Activated CD4-positive, alpha-beta T cell treated with anti-CD3 and anti-CD28 coated beads for 36 hours (primary cell): ENCODE measurements at regions of chr15 and their contacts with region 1.

Region 1: GRCh38 chr15:94306700-94307650 is 75.6 kb downstream of the MCTP2 start:
- DNase-seq: peak; percentile 38
- ATAC-seq: peak; percentile 74
- H3K4me3 Mint-ChIP-seq: no peak overlapping the region
- H3K27ac Mint-ChIP-seq: peak overlapping the region; percentile 87
- H3K4me1 Mint-ChIP-seq: peaks cover 43% of the 10 kb centered on the region
- H3K27me3 Mint-ChIP-seq: no peaks in the 10 kb centered on the region

Region 2: DNA sequence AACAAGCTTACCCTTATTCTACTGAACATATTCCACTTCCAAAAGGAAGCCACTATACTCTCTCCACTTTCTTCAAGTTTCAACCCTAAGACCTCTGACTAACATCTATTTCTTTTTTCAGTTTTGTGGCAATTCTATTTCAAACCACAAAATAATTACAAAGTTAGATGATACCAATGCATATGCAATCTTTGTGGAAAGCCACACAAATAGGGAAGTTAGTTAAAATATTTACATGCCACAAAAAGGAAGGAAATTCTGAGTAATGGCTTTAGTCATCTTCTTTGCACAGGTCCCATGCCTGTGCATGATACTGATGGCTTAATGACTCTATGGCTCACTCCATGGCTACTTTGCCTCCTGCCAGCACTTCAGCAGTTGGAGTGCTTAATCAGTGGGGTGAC is 132.6 kb before region 1 on chr15:
- CTCF ChIA-PET with region 1: interaction called, 3 read pairs
- POLR2A ChIA-PET with region 1: no interaction called
- intact Hi-C with region 1: loop called (anchors 1 to 5 kb)
- DNase-seq: peak; percentile 16
- ATAC-seq: peak; percentile 95
- H3K4me3 Mint-ChIP-seq: no peak overlapping the region
- H3K27ac Mint-ChIP-seq: no peak overlapping the region
- H3K4me1 Mint-ChIP-seq: peaks cover 25% of the 10 kb centered on the region
- H3K27me3 Mint-ChIP-seq: peaks cover 7% of the 10 kb centered on the region

Region 3: DNA sequence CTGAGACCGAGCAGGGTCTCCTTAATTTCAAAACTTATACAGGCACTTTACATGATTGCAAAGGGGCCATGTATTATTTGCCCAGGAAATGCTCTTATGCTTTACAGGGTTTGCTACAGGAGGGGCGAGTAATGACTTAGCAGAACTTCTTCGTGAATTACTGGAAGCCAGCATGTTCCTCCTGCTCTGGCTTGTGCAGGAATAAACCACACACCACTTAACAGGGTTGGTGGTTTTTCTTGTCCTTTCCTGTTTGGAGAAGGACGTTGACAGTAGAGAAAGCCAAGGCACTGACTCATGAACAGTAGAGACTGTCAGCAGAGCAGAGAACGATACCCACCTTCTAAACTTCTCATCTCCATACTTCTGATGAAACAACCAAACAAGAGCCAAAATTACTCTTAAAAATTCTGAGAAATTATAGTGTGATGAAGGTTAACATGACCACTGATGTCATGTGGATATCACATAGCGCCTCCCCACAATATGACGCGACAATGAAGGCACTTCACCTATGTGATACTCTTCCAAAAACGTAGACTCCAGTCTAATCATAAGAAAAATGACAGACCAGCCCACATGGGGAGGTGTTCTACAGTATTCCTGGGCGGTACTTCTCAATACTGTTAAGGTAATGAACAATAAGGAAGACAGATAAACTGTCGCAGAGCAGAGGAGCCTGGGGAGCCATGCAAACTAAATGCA is 100.4 kb before region 1 on chr15:
- CTCF ChIA-PET with region 1: no interaction called
- POLR2A ChIA-PET with region 1: no interaction called
- intact Hi-C with region 1: loop called (anchors 1 kb)
- DNase-seq: peak; percentile 69
- ATAC-seq: peak; percentile 95
- H3K4me3 Mint-ChIP-seq: peak overlapping the region; percentile 21
- H3K27ac Mint-ChIP-seq: peak overlapping the region; percentile 77
- H3K4me1 Mint-ChIP-seq: peaks cover 16% of the 10 kb centered on the region
- H3K27me3 Mint-ChIP-seq: peaks cover 25% of the 10 kb centered on the region

Region 4: DNA sequence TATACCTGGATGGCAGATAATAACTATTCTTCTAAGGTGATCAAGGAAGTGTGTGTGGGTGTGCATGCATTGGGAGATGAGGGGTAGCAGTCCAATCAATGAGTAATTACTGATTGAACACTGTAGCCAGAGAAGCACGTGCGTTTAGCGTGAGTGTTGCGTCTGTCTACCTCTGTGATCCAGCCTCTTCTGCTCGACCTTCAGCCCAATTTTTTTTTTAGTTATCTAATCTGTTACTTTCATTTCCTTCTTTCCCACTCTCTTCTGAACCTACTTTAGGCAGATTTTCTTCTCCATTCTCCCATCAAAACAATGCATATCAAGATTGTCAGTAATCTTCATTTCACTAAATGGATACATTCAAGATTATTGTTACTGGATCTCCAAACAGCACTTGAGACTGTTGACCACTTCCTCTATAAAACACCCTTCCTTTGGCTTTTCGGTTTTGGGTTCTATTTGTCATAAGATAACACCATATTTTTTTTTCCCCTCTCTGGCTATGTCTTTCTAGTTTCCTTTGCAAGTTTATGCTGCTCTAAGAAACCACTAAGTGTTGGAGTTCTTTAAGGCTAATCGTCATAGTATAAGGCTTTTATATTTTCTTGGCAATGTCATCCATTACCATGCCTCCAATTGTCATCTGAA is 34.6 kb before region 1 on chr15:
- CTCF ChIA-PET with region 1: interaction called, 4 read pairs
- POLR2A ChIA-PET with region 1: no interaction called
- intact Hi-C with region 1: loop called (anchors 5 kb)
- DNase-seq: no peak
- ATAC-seq: peak; percentile 83
- H3K4me3 Mint-ChIP-seq: no peak overlapping the region
- H3K27ac Mint-ChIP-seq: no peak overlapping the region
- H3K4me1 Mint-ChIP-seq: peaks cover 9% of the 10 kb centered on the region
- H3K27me3 Mint-ChIP-seq: no peaks in the 10 kb centered on the region

Region 5: DNA sequence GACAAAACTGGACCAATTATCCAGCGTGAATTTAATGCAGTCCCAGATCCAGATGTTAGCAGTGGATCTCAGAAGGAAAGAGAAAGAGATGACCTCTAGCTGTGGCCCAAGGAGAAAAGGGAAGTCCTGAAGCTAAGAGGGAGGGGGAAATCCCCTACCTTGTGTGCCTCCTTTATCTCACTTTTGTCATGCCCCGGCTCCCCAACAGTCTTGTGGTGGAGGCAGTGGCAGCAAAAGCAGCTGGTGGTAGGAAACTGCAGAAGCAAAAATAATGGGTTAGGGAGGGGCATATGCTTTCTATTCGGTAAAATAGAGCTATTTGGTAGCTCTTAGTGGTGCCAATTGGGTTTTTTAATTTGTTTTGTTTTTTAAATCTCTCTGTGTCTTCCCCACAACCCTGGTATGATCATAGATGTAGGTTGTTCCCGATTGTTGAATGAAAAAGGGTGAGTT is 19.2 kb before region 1 on chr15:
- CTCF ChIA-PET with region 1: interaction called, 4 read pairs
- POLR2A ChIA-PET with region 1: no interaction called
- intact Hi-C with region 1: loop called in 1 of 2 experiments (anchors 2 kb)
- DNase-seq: peak; percentile 67
- ATAC-seq: peak; percentile 96
- H3K4me3 Mint-ChIP-seq: peak overlapping the region; percentile 42
- H3K27ac Mint-ChIP-seq: peak overlapping the region; percentile 49
- H3K4me1 Mint-ChIP-seq: peaks cover 37% of the 10 kb centered on the region
- H3K27me3 Mint-ChIP-seq: no peaks in the 10 kb centered on the region

Region 6: DNA sequence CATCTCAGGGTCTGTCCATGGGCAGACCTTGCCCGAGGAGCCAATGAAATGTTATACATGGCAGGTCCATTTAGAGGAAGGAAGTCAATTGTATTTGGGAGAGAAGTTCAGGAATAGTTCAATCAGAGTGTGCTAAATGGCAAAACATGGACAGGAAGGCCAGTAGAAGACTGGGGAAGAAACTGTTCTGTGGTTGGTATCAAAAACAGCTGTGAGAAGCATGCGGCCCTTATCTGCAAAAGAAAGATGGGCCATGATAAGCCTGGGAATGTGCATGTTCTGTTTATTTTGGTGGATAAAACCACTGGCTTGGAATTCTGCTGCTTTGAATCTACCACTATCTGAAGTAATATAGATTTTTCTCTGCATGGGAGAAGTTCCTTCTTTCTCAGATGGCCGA is 24.8 kb after region 1 on chr15:
- CTCF ChIA-PET with region 1: no interaction called
- POLR2A ChIA-PET with region 1: no interaction called
- intact Hi-C with region 1: no loop called
- DNase-seq: no peak
- ATAC-seq: no peak
- H3K4me3 Mint-ChIP-seq: no peak overlapping the region
- H3K27ac Mint-ChIP-seq: no peak overlapping the region
- H3K4me1 Mint-ChIP-seq: no peaks in the 10 kb centered on the region
- H3K27me3 Mint-ChIP-seq: no peaks in the 10 kb centered on the region

Region 7: GRCh38 chr15:94494732-94495131 is 187.8 kb after region 1 on chr15:
- CTCF ChIA-PET with region 1: no interaction called
- POLR2A ChIA-PET with region 1: no interaction called
- intact Hi-C with region 1: no loop called
- DNase-seq: no peak
- ATAC-seq: no peak
- H3K4me3 Mint-ChIP-seq: no peak overlapping the region
- H3K27ac Mint-ChIP-seq: no peak overlapping the region
- H3K4me1 Mint-ChIP-seq: no peaks in the 10 kb centered on the region
- H3K27me3 Mint-ChIP-seq: no peaks in the 10 kb centered on the region